WTC11 (cell line): ENCODE measurements at regions of chr2 and their contacts with region 1.

Region 1: DNA sequence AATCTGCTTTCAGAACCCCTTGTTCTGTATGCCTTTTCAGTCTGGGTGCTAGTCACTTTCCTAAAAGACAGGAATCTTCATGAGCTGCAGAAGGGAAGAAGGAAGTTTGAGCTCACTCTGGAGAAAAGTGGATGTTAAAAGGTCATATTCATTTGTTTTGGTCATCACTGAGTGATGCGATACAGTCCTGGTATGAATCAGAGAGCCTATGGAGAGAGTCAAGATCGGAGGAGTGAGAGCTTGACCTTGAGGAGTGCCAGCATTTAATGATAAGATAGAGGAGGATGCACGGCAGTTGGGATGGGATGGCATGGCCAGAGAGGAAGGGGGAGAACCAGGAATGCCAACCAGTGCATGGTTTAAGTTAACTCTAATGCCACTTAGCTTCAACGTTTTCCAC is 19.6 kb downstream of the USP39 start:
- DNase-seq: no peak
- ATAC-seq: no peak
- H3K4me3 Mint-ChIP-seq: no peak overlapping the region
- H3K27ac Mint-ChIP-seq: no peak overlapping the region
- H3K4me1 Mint-ChIP-seq: no peaks in the 10 kb centered on the region
- H3K27me3 Mint-ChIP-seq: no peaks in the 10 kb centered on the region
- CTCF ChIP-seq: no peak

Region 2: GRCh38 chr2:85653996-85654395 is 18.4 kb after region 1 on chr2:
- CTCF ChIA-PET with region 1: interaction called, 27 read pairs
- POLR2A ChIA-PET with region 1: no interaction called
- DNase-seq: no peak
- ATAC-seq: no peak
- H3K4me3 Mint-ChIP-seq: no peak overlapping the region
- H3K27ac Mint-ChIP-seq: peak overlapping the region; percentile 16; the same call in 1 of the 2 replicates
- H3K4me1 Mint-ChIP-seq: peaks cover 5% of the 10 kb centered on the region
- H3K27me3 Mint-ChIP-seq: no peaks in the 10 kb centered on the region
- CTCF ChIP-seq: no peak

Region 3: GRCh38 chr2:85662899-85663593 is 27.4 kb after region 1 on chr2:
- CTCF ChIA-PET with region 1: interaction called, 19 read pairs
- POLR2A ChIA-PET with region 1: no interaction called
- DNase-seq: no peak
- ATAC-seq: peak; percentile 25
- H3K4me3 Mint-ChIP-seq: no peak overlapping the region
- H3K27ac Mint-ChIP-seq: no peak overlapping the region
- H3K4me1 Mint-ChIP-seq: no peaks in the 10 kb centered on the region
- H3K27me3 Mint-ChIP-seq: no peaks in the 10 kb centered on the region
- CTCF ChIP-seq: no peak

Region 4: GRCh38 chr2:85760371-85760770 is 124.7 kb after region 1 on chr2:
- CTCF ChIA-PET with region 1: no interaction called
- POLR2A ChIA-PET with region 1: no interaction called
- DNase-seq: no peak
- ATAC-seq: no peak
- H3K4me3 Mint-ChIP-seq: no peak overlapping the region
- H3K27ac Mint-ChIP-seq: no peak overlapping the region
- H3K4me1 Mint-ChIP-seq: peaks cover 14% of the 10 kb centered on the region
- H3K27me3 Mint-ChIP-seq: peaks cover 53% of the 10 kb centered on the region
- CTCF ChIP-seq: no peak